ENCODE measurements at regions of chr5 and their contacts with region 1.

Region 1: DNA sequence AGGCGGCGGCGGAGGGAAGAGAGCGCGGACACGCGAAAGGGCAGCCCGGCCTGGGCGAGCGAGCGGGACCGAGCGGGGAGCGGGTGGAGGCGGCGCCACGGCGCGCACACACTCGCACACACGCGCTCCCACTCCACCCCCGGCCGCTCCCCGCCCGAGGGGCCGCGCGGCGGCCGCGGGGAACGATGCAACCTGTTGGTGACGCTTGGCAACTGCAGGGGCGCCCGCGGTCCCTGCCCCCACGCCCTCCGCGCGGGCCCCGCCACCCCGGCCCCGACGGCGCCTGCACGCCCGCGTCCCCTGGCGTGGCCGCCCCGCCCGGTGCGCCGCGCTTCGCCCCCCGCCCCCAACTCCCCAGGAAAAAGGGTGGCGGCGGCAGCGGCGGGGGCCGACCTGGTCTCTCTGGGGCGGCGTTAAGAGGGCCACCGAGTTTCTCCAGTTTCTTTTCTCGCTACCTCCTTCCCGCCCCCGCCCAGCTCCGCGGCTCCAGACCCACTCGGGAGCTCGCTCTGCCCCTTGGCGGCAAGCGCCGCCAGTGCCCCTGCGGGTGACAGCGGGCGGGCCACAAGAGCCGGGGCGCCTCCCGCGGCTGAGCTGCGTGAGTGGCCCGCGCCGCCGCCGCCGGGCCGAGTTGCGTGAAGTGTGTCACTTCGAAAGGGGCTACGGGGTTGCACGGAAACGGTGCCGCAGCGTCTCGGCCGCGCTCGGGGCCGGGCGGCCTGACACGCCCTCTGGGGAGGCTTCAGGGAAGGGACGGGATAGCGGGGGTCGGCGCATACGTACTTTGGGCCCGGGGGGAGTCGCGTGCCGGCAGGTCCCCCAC is at the start of gene NR3C1:
- DNase-seq: no peak
- ATAC-seq: peak; percentile 51
- H3K4me3 ChIP-seq: peak within 1 kb of the TSS; percentile 83
- H3K27ac ChIP-seq: peak within 1 kb of the TSS; percentile 99
- H3K4me1 ChIP-seq: no peaks in the 10 kb centered on the region
- H3K27me3 ChIP-seq: no peaks in the 10 kb centered on the region
- CTCF ChIP-seq: peak; percentile 38 to 76 (median 64); a peak in 5 of 6 replicates
- EP300 ChIP-seq: peak; percentile 25 to 38; a peak in 2 of 4 replicates
- POLR2A ChIP-seq: peak; percentile 78
- RAD21 ChIP-seq: peak; percentile 67
- polyA plus RNA-seq, gene NR3C1: 89.0 to 119 TPM

Region 2: GRCh38 chr5:143016777-143017516 is 386.9 kb before region 1 on chr5:
- CTCF ChIA-PET with region 1: interaction called, 11 read pairs
- POLR2A ChIA-PET with region 1: interaction called, 6 read pairs
- RAD21 ChIA-PET with region 1: interaction called, 17 read pairs
- SMC1A ChIA-PET with region 1: interaction called, 12 read pairs
- in situ Hi-C with region 1: loop called (anchors 10 kb)
- intact Hi-C with region 1: loop called (anchors 2 kb)
- DNase-seq: no peak
- ATAC-seq: peak; percentile 28
- H3K4me3 ChIP-seq: no peak overlapping the region
- H3K27ac ChIP-seq: no peak overlapping the region
- H3K4me1 ChIP-seq: peaks cover 32% of the 10 kb centered on the region
- H3K27me3 ChIP-seq: no peaks in the 10 kb centered on the region
- CTCF ChIP-seq: peak; percentile 68 to 75 (median 72)
- EP300 ChIP-seq: peak in 1 of 2 experiments; percentile 8; a peak in 1 of 4 replicates
- POLR2A ChIP-seq: no peak
- RAD21 ChIP-seq: peak; percentile 88

Region 3: GRCh38 chr5:143161893-143162540 is 241.8 kb before region 1 on chr5:
- CTCF ChIA-PET with region 1: interaction called, 3 read pairs
- POLR2A ChIA-PET with region 1: no interaction called
- RAD21 ChIA-PET with region 1: interaction called, 3 read pairs
- SMC1A ChIA-PET with region 1: no interaction called
- in situ Hi-C with region 1: no loop called
- intact Hi-C with region 1: loop called (anchors 5 kb)
- DNase-seq: no peak
- ATAC-seq: no peak
- H3K4me3 ChIP-seq: no peak overlapping the region
- H3K27ac ChIP-seq: no peak overlapping the region
- H3K4me1 ChIP-seq: no peaks in the 10 kb centered on the region; the same call in 1 of the 2 replicates
- H3K27me3 ChIP-seq: no peaks in the 10 kb centered on the region
- CTCF ChIP-seq: no peak
- EP300 ChIP-seq: no peak
- POLR2A ChIP-seq: no peak
- RAD21 ChIP-seq: no peak

Region 4: DNA sequence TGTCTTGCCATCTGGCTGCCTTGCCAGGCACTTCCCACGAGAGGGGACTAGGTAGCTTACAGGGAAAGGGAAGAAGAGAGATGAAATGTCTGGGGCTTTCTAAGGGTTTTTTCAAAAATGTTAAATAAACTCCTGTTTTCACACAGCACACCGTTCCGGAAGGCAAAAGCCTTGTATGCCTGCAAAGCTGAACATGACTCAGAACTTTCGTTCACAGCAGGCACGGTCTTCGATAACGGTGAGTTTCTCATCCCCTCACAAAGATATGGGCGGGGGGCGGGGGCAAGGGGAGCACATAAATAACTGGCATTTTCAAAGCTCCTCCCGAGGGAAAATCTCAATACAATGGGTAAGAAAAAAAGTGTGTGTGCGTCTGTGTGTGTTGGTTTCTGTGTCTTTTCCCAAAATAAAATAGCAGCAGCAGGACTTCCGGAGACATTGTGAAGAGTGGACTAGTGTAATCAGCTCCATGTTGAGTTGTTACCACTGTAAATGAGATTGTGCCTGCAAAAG is 189.9 kb before region 1 on chr5:
- CTCF ChIA-PET with region 1: interaction called, 9 read pairs
- POLR2A ChIA-PET with region 1: interaction called, 13 read pairs
- RAD21 ChIA-PET with region 1: interaction called, 121 read pairs
- SMC1A ChIA-PET with region 1: interaction called, 70 read pairs
- in situ Hi-C with region 1: no loop called
- intact Hi-C with region 1: no loop called
- DNase-seq: peak; percentile 97
- ATAC-seq: peak; percentile 68
- H3K4me3 ChIP-seq: peak overlapping the region; percentile 6; the same call in 1 of the 2 replicates
- H3K27ac ChIP-seq: peak overlapping the region; percentile 100
- H3K4me1 ChIP-seq: peaks cover 76% of the 10 kb centered on the region
- H3K27me3 ChIP-seq: no peaks in the 10 kb centered on the region
- CTCF ChIP-seq: peak; percentile 38 to 61 (median 47); a peak in 5 of 6 replicates
- EP300 ChIP-seq: peak; percentile 73 to 82
- POLR2A ChIP-seq: peak; percentile 45
- RAD21 ChIP-seq: peak; percentile 76

Region 5: DNA sequence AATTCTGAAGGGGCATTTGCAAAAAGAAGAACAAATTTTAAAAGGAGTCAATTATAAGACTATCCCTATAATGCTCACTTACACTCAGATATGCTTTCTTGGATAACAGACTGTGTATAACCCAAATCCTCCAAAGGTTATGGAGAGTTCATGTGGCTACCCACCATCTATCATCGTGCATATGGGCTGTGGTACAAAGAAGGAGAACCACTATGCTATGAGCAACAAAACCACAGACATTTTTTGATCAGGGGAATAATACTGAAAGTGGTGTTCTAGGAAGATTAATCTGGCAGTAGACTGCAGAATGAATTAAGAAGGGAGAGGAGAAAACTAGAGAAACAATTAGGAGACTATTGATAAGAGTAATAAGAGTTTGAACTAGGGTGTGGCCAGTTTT is 17.1 kb before region 1 on chr5:
- CTCF ChIA-PET with region 1: no interaction called
- POLR2A ChIA-PET with region 1: interaction called, 7 read pairs
- RAD21 ChIA-PET with region 1: interaction called, 22 read pairs
- SMC1A ChIA-PET with region 1: interaction called, 21 read pairs
- in situ Hi-C with region 1: no loop called
- intact Hi-C with region 1: no loop called
- DNase-seq: no peak
- ATAC-seq: no peak
- H3K4me3 ChIP-seq: no peak overlapping the region
- H3K27ac ChIP-seq: no peak overlapping the region
- H3K4me1 ChIP-seq: no peaks in the 10 kb centered on the region
- H3K27me3 ChIP-seq: no peaks in the 10 kb centered on the region
- CTCF ChIP-seq: no peak
- EP300 ChIP-seq: no peak
- POLR2A ChIP-seq: no peak
- RAD21 ChIP-seq: no peak

Region 6: GRCh38 chr5:143471041-143471521 is 67.3 kb after region 1 on chr5:
- CTCF ChIA-PET with region 1: no interaction called
- POLR2A ChIA-PET with region 1: no interaction called
- RAD21 ChIA-PET with region 1: no interaction called
- SMC1A ChIA-PET with region 1: no interaction called
- in situ Hi-C with region 1: no loop called
- intact Hi-C with region 1: no loop called
- DNase-seq: no peak
- ATAC-seq: no peak
- H3K4me3 ChIP-seq: no peak overlapping the region
- H3K27ac ChIP-seq: no peak overlapping the region
- H3K4me1 ChIP-seq: no peaks in the 10 kb centered on the region
- H3K27me3 ChIP-seq: no peaks in the 10 kb centered on the region
- CTCF ChIP-seq: no peak
- EP300 ChIP-seq: no peak
- POLR2A ChIP-seq: no peak
- RAD21 ChIP-seq: no peak

Region 7: GRCh38 chr5:143592648-143593047 is 188.8 kb after region 1 on chr5:
- CTCF ChIA-PET with region 1: no interaction called
- POLR2A ChIA-PET with region 1: no interaction called
- RAD21 ChIA-PET with region 1: no interaction called
- SMC1A ChIA-PET with region 1: no interaction called
- in situ Hi-C with region 1: no loop called
- intact Hi-C with region 1: loop called (anchors 10 kb)
- DNase-seq: no peak
- ATAC-seq: peak; percentile 81
- H3K4me3 ChIP-seq: no peak overlapping the region
- H3K27ac ChIP-seq: peak overlapping the region; percentile 57
- H3K4me1 ChIP-seq: peaks cover 33% of the 10 kb centered on the region
- H3K27me3 ChIP-seq: no peaks in the 10 kb centered on the region
- CTCF ChIP-seq: no peak
- EP300 ChIP-seq: peak; percentile 16 to 56; a peak in 1 of 4 replicates
- POLR2A ChIP-seq: no peak
- RAD21 ChIP-seq: no peak

Region 8: GRCh38 chr5:143629871-143630659 is 226.3 kb after region 1 on chr5:
- CTCF ChIA-PET with region 1: no interaction called
- POLR2A ChIA-PET with region 1: no interaction called
- RAD21 ChIA-PET with region 1: no interaction called
- SMC1A ChIA-PET with region 1: no interaction called
- in situ Hi-C with region 1: no loop called
- intact Hi-C with region 1: no loop called
- DNase-seq: no peak
- ATAC-seq: no peak
- H3K4me3 ChIP-seq: no peak overlapping the region
- H3K27ac ChIP-seq: no peak overlapping the region
- H3K4me1 ChIP-seq: no peaks in the 10 kb centered on the region
- H3K27me3 ChIP-seq: no peaks in the 10 kb centered on the region
- CTCF ChIP-seq: no peak
- EP300 ChIP-seq: no peak
- POLR2A ChIP-seq: no peak
- RAD21 ChIP-seq: no peak

Region 9: GRCh38 chr5:144191998-144192397 is 788.2 kb after region 1 on chr5:
- CTCF ChIA-PET with region 1: interaction called, 5 read pairs
- POLR2A ChIA-PET with region 1: interaction called, 4 read pairs
- RAD21 ChIA-PET with region 1: interaction called, 5 read pairs
- SMC1A ChIA-PET with region 1: interaction called, 4 read pairs
- in situ Hi-C with region 1: no loop called
- intact Hi-C with region 1: loop called (anchors 5 kb)
- DNase-seq: peak; percentile 73
- ATAC-seq: peak; percentile 85
- H3K4me3 ChIP-seq: no peak overlapping the region
- H3K27ac ChIP-seq: peak overlapping the region; percentile 73
- H3K4me1 ChIP-seq: peaks cover 42% of the 10 kb centered on the region
- H3K27me3 ChIP-seq: no peaks in the 10 kb centered on the region
- CTCF ChIP-seq: peak; percentile 52 to 73 (median 69); a peak in 5 of 6 replicates
- EP300 ChIP-seq: no peak
- POLR2A ChIP-seq: no peak
- RAD21 ChIP-seq: peak; percentile 78

Measured in GM12878 (cell line).